ENCODE measurements at regions of chr19 and their contacts with region 1.

Region 1: DNA sequence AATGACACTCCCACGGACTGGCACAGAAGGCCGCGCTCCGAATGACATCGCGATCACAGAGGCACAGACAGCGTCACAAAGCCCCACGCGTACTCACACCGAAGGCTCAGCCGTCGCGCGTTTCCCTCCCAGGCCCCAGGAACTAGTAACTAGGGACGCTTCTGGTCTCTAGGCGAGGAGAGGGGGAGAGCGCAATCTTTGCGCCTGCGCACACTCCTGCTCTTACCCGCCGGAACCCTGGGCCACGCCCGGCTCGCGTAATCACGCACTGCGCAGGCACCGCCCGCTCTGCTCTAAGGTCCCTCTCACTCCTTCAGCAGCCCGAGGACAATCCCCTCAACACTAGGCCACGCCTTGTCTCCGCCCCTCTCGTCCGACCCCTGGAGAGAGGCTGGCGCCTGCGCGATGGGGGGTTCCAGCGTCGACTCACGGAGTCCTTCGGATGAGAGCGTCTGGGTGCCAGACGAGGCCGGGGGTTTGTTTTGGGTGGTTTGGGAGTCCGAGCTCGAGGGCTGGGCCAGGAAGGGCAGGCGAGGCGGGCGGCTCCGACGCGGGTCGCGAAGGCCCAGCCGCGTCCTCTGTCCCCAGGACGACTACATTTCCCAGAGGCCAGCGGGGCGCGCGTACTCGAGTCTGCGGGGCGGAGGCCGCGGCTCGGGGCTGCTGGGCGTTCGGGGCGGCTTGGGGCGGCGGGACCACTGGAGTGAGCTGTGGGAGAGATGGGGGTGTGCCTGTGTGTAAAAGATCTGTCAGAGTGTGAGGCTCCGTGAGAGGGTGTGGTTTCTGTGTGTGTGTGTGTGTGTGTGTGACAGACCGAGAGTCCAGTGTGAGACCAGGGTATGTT is at the start of gene ZNF471:
- H3K4me3 Mint-ChIP-seq: no peak within 1 kb of the TSS
- H3K27ac Mint-ChIP-seq: no peak within 1 kb of the TSS
- H3K4me1 Mint-ChIP-seq: no peaks in the 10 kb centered on the region
- H3K27me3 Mint-ChIP-seq: no peaks in the 10 kb centered on the region

Region 2: DNA sequence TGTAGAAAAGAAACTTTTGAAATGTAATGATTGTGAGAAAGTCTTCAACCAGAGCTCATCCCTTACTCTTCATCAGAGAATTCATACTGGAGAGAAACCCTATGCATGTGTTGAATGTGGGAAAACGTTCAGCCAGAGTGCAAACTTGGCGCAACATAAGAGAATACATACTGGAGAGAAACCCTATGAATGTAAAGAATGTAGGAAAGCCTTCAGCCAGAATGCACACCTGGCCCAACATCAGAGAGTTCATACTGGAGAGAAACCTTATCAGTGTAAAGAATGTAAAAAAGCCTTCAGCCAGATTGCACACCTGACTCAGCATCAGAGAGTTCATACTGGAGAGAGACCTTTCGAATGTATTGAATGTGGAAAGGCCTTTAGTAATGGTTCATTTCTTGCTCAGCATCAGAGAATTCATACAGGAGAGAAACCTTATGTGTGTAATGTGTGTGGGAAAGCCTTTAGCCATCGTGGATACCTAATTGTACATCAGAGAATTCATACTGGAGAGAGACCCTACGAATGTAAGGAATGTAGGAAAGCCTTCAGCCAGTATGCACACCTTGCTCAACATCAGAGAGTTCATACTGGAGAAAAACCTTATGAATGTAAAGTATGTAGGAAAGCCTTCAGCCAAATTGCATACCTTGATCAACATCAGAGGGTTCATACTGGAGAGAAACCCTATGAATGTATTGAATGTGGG is 84.2 kb before region 1 on chr19:
- intact Hi-C with region 1: loop called (anchors 10 kb)
- H3K4me3 Mint-ChIP-seq: no peak overlapping the region
- H3K27ac Mint-ChIP-seq: no peak overlapping the region
- H3K4me1 Mint-ChIP-seq: no peaks in the 10 kb centered on the region
- H3K27me3 Mint-ChIP-seq: no peaks in the 10 kb centered on the region

Region 3: DNA sequence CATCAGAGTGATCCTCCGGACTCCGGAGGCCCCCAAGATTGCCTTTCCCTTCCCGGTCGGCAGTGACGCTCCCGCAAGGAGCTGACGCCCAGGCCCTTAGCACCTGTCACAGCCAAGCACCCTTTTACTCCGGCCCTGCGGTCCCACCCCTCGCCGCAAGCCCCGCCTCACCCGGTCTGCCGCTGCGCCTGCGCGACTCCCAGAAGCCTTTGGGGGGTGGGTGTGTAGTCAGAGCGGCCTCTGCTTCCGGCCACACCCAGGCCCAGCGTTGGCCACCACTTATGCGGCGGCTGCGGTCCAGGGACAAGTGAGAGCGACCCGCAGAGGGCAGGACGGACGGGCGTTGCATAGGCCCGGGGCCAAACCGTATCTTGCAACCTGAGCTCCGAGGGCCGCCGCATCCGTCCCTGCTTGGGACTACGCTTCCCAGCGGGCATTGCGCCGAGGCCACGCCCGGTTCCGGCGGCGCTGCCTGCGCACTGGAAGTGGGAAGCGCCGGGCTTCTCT is 30.6 kb after region 1 on chr19:
- intact Hi-C with region 1: loop called (anchors 1 kb)
- H3K4me3 Mint-ChIP-seq: peak overlapping the region; percentile 91
- H3K27ac Mint-ChIP-seq: peak overlapping the region; percentile 97
- H3K4me1 Mint-ChIP-seq: peaks cover 23% of the 10 kb centered on the region
- H3K27me3 Mint-ChIP-seq: peaks cover 3% of the 10 kb centered on the region

Region 4: GRCh38 chr19:56778351-56778750 is 270.7 kb after region 1 on chr19:
- intact Hi-C with region 1: no loop called
- H3K4me3 Mint-ChIP-seq: no peak overlapping the region
- H3K27ac Mint-ChIP-seq: no peak overlapping the region
- H3K4me1 Mint-ChIP-seq: no peaks in the 10 kb centered on the region
- H3K27me3 Mint-ChIP-seq: no peaks in the 10 kb centered on the region